Endothelial cell of umbilical vein (primary cell): ENCODE measurements at regions of chr1 and their contacts with region 1.

Region 1: GRCh38 chr1:8910914-8911313 is 32.4 kb upstream of the ENO1 start:
- DNase-seq: no peak
- H3K4me3 ChIP-seq: no peak overlapping the region
- H3K27ac ChIP-seq: no peak overlapping the region
- H3K4me1 ChIP-seq: no peaks in the 10 kb centered on the region
- H3K27me3 ChIP-seq: peaks cover 0 to 4% of the 10 kb centered on the region in 2 experiments
- CTCF ChIP-seq: no peak
- POLR2A ChIP-seq: no peak

Region 2: GRCh38 chr1:8992936-8993687 is 82.2 kb after region 1 on chr1:
- CTCF ChIA-PET with region 1: interaction called, 19 read pairs
- POLR2A ChIA-PET with region 1: no interaction called
- dilution Hi-C with region 1: no loop called
- intact Hi-C with region 1: no loop called
- DNase-seq: no peak
- H3K4me3 ChIP-seq: no peak overlapping the region
- H3K27ac ChIP-seq: no peak overlapping the region
- H3K4me1 ChIP-seq: no peaks in the 10 kb centered on the region
- H3K27me3 ChIP-seq: no peaks in the 10 kb centered on the region
- CTCF ChIP-seq: peak; percentile 14 to 27
- POLR2A ChIP-seq: no peak

Region 3: DNA sequence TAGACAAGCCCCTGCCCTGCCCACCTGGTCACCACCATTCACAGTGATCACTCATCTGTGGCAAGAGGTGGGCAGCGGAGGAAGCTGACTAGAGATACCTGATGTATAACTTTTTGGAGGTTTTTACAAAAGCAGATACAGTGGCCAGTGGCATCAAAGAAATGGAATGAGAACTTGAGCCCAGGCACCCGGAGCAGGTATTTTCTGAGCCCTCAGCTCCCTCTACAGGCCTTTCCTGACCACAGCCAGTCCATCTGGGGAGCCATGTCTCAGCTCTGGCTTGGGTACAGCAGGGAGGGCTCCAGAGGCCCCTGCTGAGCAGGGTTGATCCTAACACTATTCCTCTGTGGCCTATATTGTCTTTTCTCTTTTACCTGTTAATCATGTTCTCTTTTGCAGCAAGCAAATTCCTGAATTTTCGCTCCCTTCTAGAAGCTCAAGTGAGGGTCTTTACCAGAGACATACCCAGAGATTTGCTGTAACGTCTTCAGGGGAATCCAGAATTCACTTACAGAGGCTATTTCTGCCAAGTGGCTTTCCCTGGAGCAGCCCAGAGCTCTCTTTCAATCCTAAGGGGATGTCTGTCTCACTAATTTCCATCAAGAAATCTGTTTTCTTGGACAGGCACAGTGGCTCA is 190.7 kb after region 1 on chr1:
- CTCF ChIA-PET with region 1: interaction called, 10 read pairs
- POLR2A ChIA-PET with region 1: no interaction called
- dilution Hi-C with region 1: no loop called
- intact Hi-C with region 1: no loop called
- DNase-seq: peak; percentile 51
- H3K4me3 ChIP-seq: no peak overlapping the region
- H3K27ac ChIP-seq: no peak overlapping the region
- H3K4me1 ChIP-seq: no peaks in the 10 kb centered on the region
- H3K27me3 ChIP-seq: no peaks in the 10 kb centered on the region
- CTCF ChIP-seq: peak; percentile 64 to 80
- POLR2A ChIP-seq: no peak

Region 4: GRCh38 chr1:9145021-9145668 is 234.2 kb after region 1 on chr1:
- CTCF ChIA-PET with region 1: no interaction called
- POLR2A ChIA-PET with region 1: no interaction called
- dilution Hi-C with region 1: no loop called
- intact Hi-C with region 1: no loop called
- DNase-seq: no peak
- H3K4me3 ChIP-seq: no peak overlapping the region
- H3K27ac ChIP-seq: no peak overlapping the region
- H3K4me1 ChIP-seq: peaks cover 9% of the 10 kb centered on the region
- H3K27me3 ChIP-seq: no peaks in the 10 kb centered on the region
- CTCF ChIP-seq: no peak
- POLR2A ChIP-seq: no peak